CD8-positive, alpha-beta T cell (primary cell): ENCODE measurements at regions of chr17 and their contacts with region 1.

Region 1: DNA sequence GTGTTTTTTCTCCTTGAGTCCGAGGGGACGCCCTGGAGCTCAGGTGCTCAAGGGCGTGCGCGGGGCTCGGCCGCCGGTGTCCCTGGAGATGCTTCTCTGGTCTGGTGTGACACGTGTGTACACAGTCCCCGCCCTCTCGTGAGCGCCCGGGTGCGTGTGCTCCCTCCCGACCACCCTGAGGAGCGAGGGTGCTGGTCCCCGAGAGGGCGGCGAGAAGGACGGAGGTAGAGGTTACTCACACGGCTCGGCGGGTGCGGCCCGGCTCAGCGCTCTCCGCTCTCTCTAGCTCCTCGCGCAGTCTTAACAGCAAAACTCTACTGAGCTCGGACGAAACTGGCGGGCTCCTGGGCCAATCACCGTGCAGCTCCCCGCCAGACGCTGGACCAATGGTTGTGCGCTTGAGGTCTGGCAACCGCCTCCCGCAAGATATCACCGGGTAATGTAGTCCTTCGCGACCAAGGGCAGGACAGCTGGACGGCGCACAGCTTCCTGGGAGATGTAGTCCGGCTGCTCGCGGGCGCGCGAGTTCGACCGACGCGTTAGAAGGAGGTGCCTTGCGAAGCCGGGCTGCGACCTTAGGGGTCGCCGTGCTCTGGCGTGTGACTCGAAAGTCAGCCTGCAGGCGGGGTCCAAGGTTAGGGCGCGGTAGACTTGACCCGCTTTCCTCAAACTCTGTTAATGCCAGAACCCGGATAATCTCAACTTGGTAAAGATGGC is at the start of gene SLC25A19:
- DNase-seq: peak; percentile 90 to 99 (median 96)
- ATAC-seq: peak; percentile 88
- H3K4me3 ChIP-seq: peak within 1 kb of the TSS; percentile 70 to 77
- H3K4me3 Mint-ChIP-seq: peak within 1 kb of the TSS; percentile 97
- H3K27ac ChIP-seq: peak within 1 kb of the TSS; percentile 95 to 97
- H3K27ac Mint-ChIP-seq: peak within 1 kb of the TSS; percentile 100
- H3K4me1 ChIP-seq: peaks cover 16% of the 10 kb centered on the region
- H3K4me1 Mint-ChIP-seq: peaks cover 16% of the 10 kb centered on the region
- H3K27me3 ChIP-seq: no peaks in the 10 kb centered on the region
- H3K27me3 Mint-ChIP-seq: no peaks in the 10 kb centered on the region
- CTCF ChIP-seq: no peak
- total RNA-seq, gene SLC25A19: 14.4 to 14.8 TPM

Region 2: DNA sequence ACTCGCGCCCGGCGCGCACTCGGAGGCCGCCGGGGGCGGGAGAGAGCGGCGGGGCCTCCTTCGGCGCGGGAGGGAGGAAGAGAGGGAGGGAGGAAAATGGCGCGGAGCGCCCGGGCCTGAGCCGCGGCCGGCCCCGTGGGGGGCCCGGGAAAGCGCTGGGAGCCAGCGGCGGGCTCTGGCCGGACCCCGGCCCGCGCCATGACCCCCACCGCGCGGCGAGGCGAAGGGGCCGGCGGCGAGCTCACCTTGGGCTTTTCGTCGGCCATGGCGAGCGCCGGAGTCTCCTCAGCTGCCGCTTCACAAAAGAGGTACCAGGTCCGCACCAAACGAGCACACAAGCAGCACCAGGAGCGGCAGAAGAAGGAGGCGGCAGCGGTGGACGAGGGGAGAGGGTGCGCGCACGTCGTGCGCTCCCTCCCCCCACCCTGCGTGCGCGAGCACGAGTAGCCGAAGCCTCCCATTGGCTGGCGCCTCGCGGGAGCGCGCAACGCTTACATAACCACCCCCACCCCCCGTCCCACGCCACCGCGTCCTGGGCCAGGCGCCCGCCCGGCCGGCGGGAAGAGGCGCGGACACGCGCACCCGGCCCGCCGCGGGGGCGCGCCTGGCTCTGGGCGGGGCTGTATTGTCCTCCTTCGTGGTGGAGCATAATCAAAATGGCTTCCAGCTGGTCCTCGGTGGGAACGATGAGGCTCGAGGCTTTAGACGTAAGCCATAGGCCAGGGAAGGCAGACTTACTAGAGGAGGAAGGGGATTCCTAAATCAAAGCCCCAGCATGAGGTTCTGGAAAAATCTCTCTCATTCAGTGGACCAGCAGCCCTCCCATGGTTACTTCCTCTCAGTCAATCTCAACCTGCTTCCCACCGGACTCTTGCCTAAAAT is 106.5 kb before region 1 on chr17 and contains the start of gene SUMO2:
- CTCF ChIA-PET with region 1: no interaction called
- POLR2A ChIA-PET with region 1: interaction called, 3 read pairs
- intact Hi-C with region 1: loop called in 1 of 2 experiments (anchors 1 kb)
- DNase-seq: peak; percentile 89 to 98 (median 95)
- ATAC-seq: peak; percentile 77
- H3K4me3 ChIP-seq: peak within 1 kb of the TSS; percentile 68 to 82
- H3K4me3 Mint-ChIP-seq: peak within 1 kb of the TSS; percentile 92
- H3K27ac ChIP-seq: peak within 1 kb of the TSS; percentile 95
- H3K27ac Mint-ChIP-seq: peak within 1 kb of the TSS; percentile 98
- H3K4me1 ChIP-seq: peaks cover 28% of the 10 kb centered on the region
- H3K4me1 Mint-ChIP-seq: peaks cover 46% of the 10 kb centered on the region
- H3K27me3 ChIP-seq: no peaks in the 10 kb centered on the region
- H3K27me3 Mint-ChIP-seq: no peaks in the 10 kb centered on the region
- CTCF ChIP-seq: no peak
- total RNA-seq, gene SUMO2: 192 to 203 TPM

Region 3: DNA sequence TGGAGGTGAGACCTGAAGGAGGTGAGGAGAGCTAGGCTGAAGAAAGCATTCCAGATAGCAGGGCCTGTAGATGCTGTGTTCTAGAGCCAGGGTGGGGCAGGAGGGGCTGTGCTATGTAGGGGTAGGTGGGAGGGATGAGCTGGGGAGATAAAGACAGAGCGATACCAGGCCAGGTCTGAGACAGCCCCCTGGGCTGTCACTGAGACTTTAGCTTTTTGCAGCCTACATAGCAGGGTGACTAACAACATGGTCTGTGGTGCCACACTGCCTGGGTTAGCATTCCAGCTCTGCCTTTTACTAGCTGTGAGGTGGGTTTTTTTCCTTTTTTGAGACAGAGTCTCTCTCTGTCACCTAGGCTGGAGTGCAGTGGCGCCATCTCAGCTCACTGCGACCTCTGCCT is 69.5 kb before region 1 on chr17:
- CTCF ChIA-PET with region 1: no interaction called
- POLR2A ChIA-PET with region 1: no interaction called
- intact Hi-C with region 1: no loop called
- DNase-seq: no peak
- ATAC-seq: no peak
- H3K4me3 ChIP-seq: no peak overlapping the region
- H3K4me3 Mint-ChIP-seq: no peak overlapping the region
- H3K27ac ChIP-seq: no peak overlapping the region
- H3K27ac Mint-ChIP-seq: peak overlapping the region; percentile 22
- H3K4me1 ChIP-seq: no peaks in the 10 kb centered on the region
- H3K4me1 Mint-ChIP-seq: peaks cover 4% of the 10 kb centered on the region
- H3K27me3 ChIP-seq: no peaks in the 10 kb centered on the region
- H3K27me3 Mint-ChIP-seq: no peaks in the 10 kb centered on the region
- CTCF ChIP-seq: no peak

Region 4: GRCh38 chr17:75319904-75320691 is 30.8 kb after region 1 on chr17:
- CTCF ChIA-PET with region 1: interaction called, 11 read pairs
- POLR2A ChIA-PET with region 1: interaction called, 9 read pairs
- intact Hi-C with region 1: loop called (anchors 1 kb)
- DNase-seq: no peak
- ATAC-seq: no peak
- H3K4me3 ChIP-seq: no peak overlapping the region
- H3K4me3 Mint-ChIP-seq: no peak overlapping the region
- H3K27ac ChIP-seq: no peak overlapping the region
- H3K27ac Mint-ChIP-seq: no peak overlapping the region
- H3K4me1 ChIP-seq: peaks cover 5% of the 10 kb centered on the region
- H3K4me1 Mint-ChIP-seq: peaks cover 6% of the 10 kb centered on the region
- H3K27me3 ChIP-seq: no peaks in the 10 kb centered on the region
- H3K27me3 Mint-ChIP-seq: no peaks in the 10 kb centered on the region
- CTCF ChIP-seq: no peak

Region 5: DNA sequence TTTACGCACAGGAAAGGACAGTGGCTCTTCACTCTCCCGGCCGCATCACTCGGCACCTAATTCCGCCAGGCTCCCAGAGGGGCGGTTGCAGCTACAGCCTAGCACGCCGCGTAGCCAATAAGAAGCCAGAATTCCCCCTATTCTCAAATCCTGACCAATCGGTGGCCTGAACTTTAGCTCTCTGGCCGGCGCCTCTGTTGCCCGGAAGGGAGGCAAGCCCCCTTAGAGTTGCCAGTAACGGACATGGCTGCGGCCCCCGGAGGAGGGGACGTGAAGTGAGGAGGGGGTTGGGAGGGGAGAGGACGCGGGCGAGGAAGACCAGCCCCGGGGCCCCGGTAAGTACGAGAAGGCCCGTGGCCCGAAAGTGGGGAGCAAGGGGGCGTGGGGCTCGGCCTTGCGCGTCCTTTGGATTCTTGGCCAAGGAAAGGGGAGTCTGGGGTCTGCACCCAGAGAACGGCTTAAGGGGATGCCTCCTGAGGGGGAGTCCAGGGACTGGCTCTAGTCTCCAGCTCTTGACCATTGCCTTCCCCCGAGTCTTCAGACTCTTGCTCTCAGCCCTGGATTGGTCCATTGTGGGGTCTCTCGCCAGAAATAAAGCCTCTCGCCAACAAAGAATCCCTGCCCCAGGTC is 167.3 kb after region 1 on chr17 and contains the start of gene TMEM94:
- CTCF ChIA-PET with region 1: no interaction called
- POLR2A ChIA-PET with region 1: interaction called, 9 read pairs
- intact Hi-C with region 1: loop called (anchors 1 kb)
- DNase-seq: peak; percentile 80 to 98 (median 91)
- ATAC-seq: peak; percentile 97
- H3K4me3 ChIP-seq: peak within 1 kb of the TSS; percentile 100
- H3K4me3 Mint-ChIP-seq: peak within 1 kb of the TSS; percentile 96
- H3K27ac ChIP-seq: peak within 1 kb of the TSS; percentile 75 to 82
- H3K27ac Mint-ChIP-seq: peak within 1 kb of the TSS; percentile 92
- H3K4me1 ChIP-seq: peaks cover 16% of the 10 kb centered on the region
- H3K4me1 Mint-ChIP-seq: peaks cover 36% of the 10 kb centered on the region
- H3K27me3 ChIP-seq: no peaks in the 10 kb centered on the region
- H3K27me3 Mint-ChIP-seq: peaks cover 3% of the 10 kb centered on the region
- CTCF ChIP-seq: no peak
- total RNA-seq, gene TMEM94: 44.8 to 46.5 TPM

Region 6: GRCh38 chr17:75524953-75525719 is 235.9 kb after region 1 on chr17 and contains the start of gene LLGL2:
- CTCF ChIA-PET with region 1: no interaction called
- POLR2A ChIA-PET with region 1: no interaction called
- intact Hi-C with region 1: loop called (anchors 1 to 2 kb)
- DNase-seq: peak; percentile 74 to 94 (median 85)
- ATAC-seq: peak; percentile 94
- H3K4me3 ChIP-seq: peak within 1 kb of the TSS; percentile 70 to 78
- H3K4me3 Mint-ChIP-seq: peak within 1 kb of the TSS; percentile 82
- H3K27ac ChIP-seq: peak within 1 kb of the TSS; percentile 21 to 47
- H3K27ac Mint-ChIP-seq: no peak within 1 kb of the TSS
- H3K4me1 ChIP-seq: peaks cover 22% of the 10 kb centered on the region
- H3K4me1 Mint-ChIP-seq: peaks cover 13% of the 10 kb centered on the region
- H3K27me3 ChIP-seq: no peaks in the 10 kb centered on the region
- H3K27me3 Mint-ChIP-seq: no peaks in the 10 kb centered on the region
- CTCF ChIP-seq: no peak
- total RNA-seq, gene LLGL2: 32.7 to 36.4 TPM

Region 7: DNA sequence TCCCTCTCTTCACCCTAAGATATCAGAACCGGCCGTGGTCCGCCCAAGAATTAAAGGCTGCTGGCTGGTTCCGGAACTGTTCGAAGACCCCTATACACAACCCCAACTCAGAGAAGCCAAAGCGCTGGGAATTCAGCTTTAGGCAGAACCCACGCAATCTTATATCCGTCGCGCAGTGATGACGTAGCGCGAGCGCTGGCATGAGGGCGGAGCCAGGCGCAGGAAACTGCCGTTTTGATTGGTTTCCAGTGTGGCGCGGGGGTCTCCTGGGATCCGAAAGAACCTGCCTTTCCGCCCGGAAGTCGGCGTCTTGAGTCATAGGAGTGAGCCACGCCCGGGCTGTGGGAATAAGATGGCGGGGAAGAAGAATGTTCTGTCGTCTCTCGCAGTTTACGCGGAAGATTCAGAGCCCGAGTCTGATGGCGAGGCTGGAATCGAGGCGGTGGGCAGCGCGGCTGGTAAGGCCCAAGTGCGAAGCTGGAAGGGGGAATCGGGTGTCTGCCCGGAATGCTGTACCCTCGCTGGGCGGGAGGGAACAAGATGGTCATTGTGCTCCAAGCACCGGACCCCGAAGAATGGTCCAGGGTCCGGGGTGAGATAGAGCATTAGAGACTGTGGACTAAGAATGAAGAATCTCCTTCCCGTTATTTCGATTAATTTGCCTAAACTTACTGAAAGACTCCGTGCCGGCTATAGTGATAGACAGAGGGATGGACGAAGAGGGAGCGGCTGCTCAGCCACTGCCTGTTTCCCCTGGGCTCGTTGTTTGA is 377.9 kb after region 1 on chr17 and contains the starts of genes RECQL5 and SAP30BP:
- CTCF ChIA-PET with region 1: no interaction called
- POLR2A ChIA-PET with region 1: interaction called, 6 read pairs
- intact Hi-C with region 1: loop called in 1 of 2 experiments (anchors 5 kb)
- DNase-seq: peak; percentile 95 to 99 (median 98)
- ATAC-seq: peak; percentile 100
- H3K4me3 ChIP-seq: peak within 1 kb of the TSS; percentile 78 to 85
- H3K4me3 Mint-ChIP-seq: peak within 1 kb of the TSS; percentile 58
- H3K27ac ChIP-seq: peak within 1 kb of the TSS; percentile 88 to 96
- H3K27ac Mint-ChIP-seq: no peak within 1 kb of the TSS
- H3K4me1 ChIP-seq: peaks cover 18% of the 10 kb centered on the region
- H3K4me1 Mint-ChIP-seq: peaks cover 33% of the 10 kb centered on the region
- H3K27me3 ChIP-seq: no peaks in the 10 kb centered on the region
- H3K27me3 Mint-ChIP-seq: no peaks in the 10 kb centered on the region
- CTCF ChIP-seq: no peak
- total RNA-seq, gene RECQL5: 11.2 to 13.2 TPM
- total RNA-seq, gene SAP30BP: 303 to 305 TPM